ENCODE measurements at regions of chr11 and their contacts with region 1.

Region 1: GRCh38 chr11:59201353-59201752 is 11.4 kb downstream of the MPEG1 start:
- DNase-seq: no peak
- H3K4me3 ChIP-seq: no peak overlapping the region
- H3K4me3 Mint-ChIP-seq: no peak overlapping the region
- H3K27ac ChIP-seq: no peak overlapping the region
- H3K27ac Mint-ChIP-seq: peak overlapping the region in 1 of 8 donors; percentile 24
- H3K4me1 ChIP-seq: no peaks in the 10 kb centered on the region
- H3K4me1 Mint-ChIP-seq: peaks cover 0 to 7% (median 0%) of the 10 kb centered on the region in 3 donors
- H3K27me3 ChIP-seq: no peaks in the 10 kb centered on the region
- H3K27me3 Mint-ChIP-seq: peaks cover 4 to 5% of the 10 kb centered on the region in 2 donors

Region 2: DNA sequence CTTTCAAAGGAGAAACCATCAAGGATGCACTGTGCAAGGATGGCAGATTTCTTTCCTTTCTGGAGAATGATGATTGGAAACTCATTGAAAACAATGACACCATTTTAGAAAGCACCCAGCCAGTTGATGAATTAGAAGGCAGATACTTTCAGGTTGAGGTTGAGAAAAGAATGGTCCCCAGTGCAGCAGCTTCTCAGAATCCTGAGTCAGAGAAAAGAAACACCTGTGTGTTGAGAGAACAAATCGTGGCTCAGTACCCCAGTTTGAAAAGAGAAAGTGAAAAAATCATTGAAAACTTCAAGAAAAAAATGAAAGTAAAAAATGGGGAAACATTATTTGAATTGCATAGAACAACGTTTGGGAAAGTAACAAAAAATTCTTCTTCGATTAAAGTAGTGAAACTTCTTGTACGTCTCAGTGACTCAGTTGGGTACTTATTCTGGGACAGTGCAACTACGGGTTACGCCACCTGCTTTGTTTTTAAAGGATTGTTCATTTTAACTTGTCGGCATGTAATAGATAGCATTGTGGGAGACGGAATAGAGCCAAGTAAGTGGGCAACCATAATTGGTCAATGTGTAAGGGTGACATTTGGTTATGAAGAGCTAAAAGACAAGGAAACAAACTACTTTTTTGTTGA is 48.9 kb before region 1 on chr11:
- CTCF ChIA-PET with region 1: no interaction called
- POLR2A ChIA-PET with region 1: no interaction called
- DNase-seq: no peak
- H3K4me3 ChIP-seq: no peak overlapping the region
- H3K4me3 Mint-ChIP-seq: peak overlapping the region in 6 of 7 donors; percentile 29 to 65 (median 44)
- H3K27ac ChIP-seq: no peak overlapping the region
- H3K27ac Mint-ChIP-seq: peak overlapping the region; percentile 5 to 89 (median 48)
- H3K4me1 ChIP-seq: peaks cover 4% of the 10 kb centered on the region
- H3K4me1 Mint-ChIP-seq: peaks cover 14 to 47% (median 39%) of the 10 kb centered on the region in 3 donors
- H3K27me3 ChIP-seq: no peaks in the 10 kb centered on the region
- H3K27me3 Mint-ChIP-seq: no peaks in the 10 kb centered on the region

Region 3: GRCh38 chr11:59186130-59186594 is 15.2 kb before region 1 on chr11:
- CTCF ChIA-PET with region 1: interaction called, 13 read pairs
- POLR2A ChIA-PET with region 1: interaction called, 3 read pairs
- DNase-seq: peak; percentile 35 to 64 (median 42)
- H3K4me3 ChIP-seq: no peak overlapping the region
- H3K4me3 Mint-ChIP-seq: no peak overlapping the region
- H3K27ac ChIP-seq: no peak overlapping the region
- H3K27ac Mint-ChIP-seq: peak overlapping the region in 2 of 8 donors; percentile 3 to 42
- H3K4me1 ChIP-seq: no peaks in the 10 kb centered on the region
- H3K4me1 Mint-ChIP-seq: no peaks in the 10 kb centered on the region
- H3K27me3 ChIP-seq: no peaks in the 10 kb centered on the region
- H3K27me3 Mint-ChIP-seq: peaks cover 4 to 13% of the 10 kb centered on the region in 2 donors

Measured in CD8-positive, alpha-beta memory T cell (primary cell).